ENCODE measurements at regions of chr12 and their contacts with region 1.

Region 1: GRCh38 chr12:44812062-44812461 is 64.1 kb downstream of the NELL2 start:
- DNase-seq: no peak
- H3K4me3 Mint-ChIP-seq: no peak overlapping the region
- H3K27ac Mint-ChIP-seq: no peak overlapping the region
- H3K4me1 Mint-ChIP-seq: peaks cover 16% of the 10 kb centered on the region
- H3K27me3 Mint-ChIP-seq: no peaks in the 10 kb centered on the region

Region 2: DNA sequence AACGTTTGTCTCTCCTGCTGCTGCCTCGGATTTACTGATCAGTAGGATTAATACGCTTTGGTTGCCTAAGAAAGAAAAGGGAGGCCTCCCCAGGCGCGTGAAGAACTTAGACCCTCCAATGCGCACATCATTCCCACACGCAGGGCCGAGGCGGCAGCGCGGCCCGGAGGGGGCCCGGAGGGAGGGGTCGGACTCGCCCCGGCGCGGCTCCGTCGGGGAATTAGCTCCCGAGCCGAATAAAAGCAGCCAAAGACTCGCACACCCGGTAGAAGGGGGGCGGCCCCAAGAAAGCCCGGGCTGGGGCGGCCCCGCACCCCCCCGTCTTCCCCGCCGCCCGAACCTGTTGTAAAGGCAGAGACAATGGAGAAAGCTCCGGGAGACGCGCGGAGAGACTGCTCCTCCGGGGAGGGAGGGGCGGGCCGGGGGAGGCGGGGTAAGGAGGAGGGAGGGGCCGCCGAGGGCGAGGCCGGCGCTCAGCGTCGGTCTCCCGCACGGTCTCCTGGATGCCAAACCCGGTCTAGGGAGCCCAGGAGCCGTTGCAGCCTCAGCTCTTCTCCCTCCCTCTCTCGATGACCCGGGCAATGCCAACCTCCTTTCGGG is 64.0 kb after region 1 on chr12 and contains the start of gene NELL2:
- intact Hi-C with region 1: loop called (anchors 1 kb)
- DNase-seq: peak; percentile 33
- H3K4me3 Mint-ChIP-seq: peak within 1 kb of the TSS; percentile 93
- H3K27ac Mint-ChIP-seq: no peak within 1 kb of the TSS
- H3K4me1 Mint-ChIP-seq: peaks cover 26% of the 10 kb centered on the region
- H3K27me3 Mint-ChIP-seq: peaks cover 39% of the 10 kb centered on the region
- total RNA-seq, gene NELL2: 7.7 and 10.2 TPM in 2 replicates

Region 3: DNA sequence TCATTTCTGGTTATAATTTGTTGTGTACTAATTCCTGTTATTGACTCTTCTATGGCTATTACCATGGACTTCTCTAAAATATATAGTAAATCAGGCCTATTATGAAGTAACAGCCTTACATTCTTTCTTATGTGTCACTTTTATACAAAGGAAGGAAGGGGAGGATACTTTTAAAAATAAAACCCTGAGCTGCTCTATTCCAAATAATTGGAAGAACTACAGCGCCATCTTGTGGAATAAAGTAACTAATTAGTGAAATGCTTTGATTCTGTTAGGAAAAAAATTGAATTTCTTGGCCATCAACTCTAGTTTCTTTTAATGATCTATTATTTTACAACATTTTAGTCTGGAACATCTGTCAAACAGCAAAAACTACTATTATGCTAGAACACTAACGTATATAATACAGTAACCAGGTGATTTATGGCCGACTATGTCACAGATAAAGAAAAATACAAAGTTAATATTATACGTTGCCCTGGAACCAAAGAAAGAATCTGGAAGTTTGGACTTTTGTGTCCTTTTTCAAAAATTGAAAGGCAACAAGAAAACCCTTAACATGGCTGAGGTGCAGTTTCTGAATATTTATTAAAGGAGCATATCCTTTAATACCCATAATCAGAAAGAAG is 119.0 kb after region 1 on chr12:
- intact Hi-C with region 1: loop called (anchors 1 kb)
- DNase-seq: no peak
- H3K4me3 Mint-ChIP-seq: no peak overlapping the region
- H3K27ac Mint-ChIP-seq: no peak overlapping the region
- H3K4me1 Mint-ChIP-seq: peaks cover 1% of the 10 kb centered on the region
- H3K27me3 Mint-ChIP-seq: no peaks in the 10 kb centered on the region